GM10248 (cell line): ENCODE measurements at regions of chr11 and their contacts with region 1.

Region 1: DNA sequence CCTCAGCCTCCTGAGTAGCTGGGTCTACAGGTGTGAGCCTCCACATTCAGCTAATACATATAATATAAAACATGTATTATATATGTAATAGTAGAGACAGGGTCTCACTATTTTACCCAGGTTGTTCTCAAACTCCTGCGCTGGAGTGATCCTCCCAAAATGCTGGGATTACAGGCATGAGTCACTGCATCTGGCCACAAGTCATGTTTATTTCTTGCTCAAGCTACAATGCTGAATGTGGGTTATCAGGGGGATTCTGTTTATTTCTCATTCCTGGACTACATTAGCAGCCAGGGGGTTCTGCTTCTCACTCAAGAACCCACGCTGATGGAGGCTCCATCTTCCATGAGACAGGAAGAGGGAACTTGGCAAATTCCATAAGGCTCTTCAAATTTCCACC is 24.8 kb downstream of the FOLR3 start:
- DNase-seq: no peak
- CTCF ChIP-seq: no peak

Region 2: DNA sequence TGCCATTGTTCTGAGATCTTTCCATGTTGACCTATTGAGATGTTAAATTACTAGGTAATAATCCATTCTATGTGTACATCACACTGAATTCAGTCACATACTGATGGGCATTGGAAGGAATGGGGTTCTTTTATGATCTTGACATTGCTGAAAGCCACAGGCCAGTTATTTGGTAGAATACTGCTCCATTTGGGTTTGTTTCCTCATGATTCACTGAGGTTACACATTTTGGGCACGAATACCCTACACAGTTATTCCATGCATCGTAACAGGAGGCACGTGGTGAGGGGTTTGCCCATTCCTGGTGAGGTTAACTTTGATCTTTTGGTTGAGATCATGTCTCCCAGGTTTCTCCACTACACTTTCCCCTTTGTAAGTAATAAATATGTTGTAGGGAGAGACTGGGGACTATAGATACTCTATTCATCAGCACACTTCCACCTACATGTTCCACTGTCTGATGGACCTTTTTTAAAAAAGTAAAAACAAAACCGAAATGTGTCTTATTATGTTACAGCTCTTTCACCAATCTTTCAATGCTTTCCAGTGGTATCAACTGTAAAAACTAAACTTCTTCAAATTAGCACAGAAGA is 19.6 kb after region 1 on chr11:
- CTCF ChIA-PET with region 1: interaction called, 15 read pairs
- POLR2A ChIA-PET with region 1: no interaction called
- DNase-seq: no peak
- CTCF ChIP-seq: no peak